ENCODE measurements at regions of chr12 and their contacts with region 1.

Region 1: DNA sequence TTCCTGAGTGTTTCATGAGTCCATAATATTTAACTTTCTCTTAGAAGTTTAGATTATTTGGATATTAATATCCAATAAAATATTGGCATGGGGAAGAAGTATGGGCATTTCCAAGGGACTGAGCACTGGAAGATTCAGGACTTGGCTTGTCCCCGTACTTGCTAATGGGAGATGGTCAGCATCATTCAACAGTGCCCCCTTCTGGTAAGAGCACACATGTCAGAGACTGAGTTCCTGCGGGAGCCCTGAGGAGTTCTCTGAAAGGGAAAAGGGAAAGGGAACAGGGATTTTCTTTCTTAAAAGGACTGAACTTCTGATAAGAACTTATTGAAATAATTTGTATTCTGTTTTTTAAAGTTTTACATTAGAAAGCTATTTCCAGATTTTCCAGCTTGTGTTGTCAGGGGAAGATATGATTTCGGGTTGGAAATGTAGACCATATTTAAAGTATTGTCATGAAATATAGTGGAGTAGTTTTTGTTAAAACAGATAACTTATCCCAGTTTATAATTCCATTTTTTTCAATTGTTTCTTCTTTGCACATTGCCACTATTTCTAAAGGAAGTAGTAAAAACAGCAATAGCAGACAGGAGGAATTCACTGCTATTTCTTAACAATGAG is 59.8 kb upstream of the C12orf71 start:
- DNase-seq: peak; percentile 79
- H3K4me3 ChIP-seq: no peak overlapping the region
- H3K27ac ChIP-seq: peak overlapping the region in 2 of 4 donors; percentile 37 to 55
- H3K4me1 ChIP-seq: peaks cover 0 to 24% (median 9%) of the 10 kb centered on the region in 4 donors
- H3K27me3 ChIP-seq: no peaks in the 10 kb centered on the region
- CTCF ChIP-seq: peak; percentile 63 to 79 (median 69)
- EP300 ChIP-seq: no peak
- POLR2A ChIP-seq: no peak

Region 2: GRCh38 chr12:27024291-27024690 is 117.9 kb before region 1 on chr12:
- intact Hi-C with region 1: loop called (anchors 5 kb)
- DNase-seq: no peak
- H3K4me3 ChIP-seq: no peak overlapping the region
- H3K27ac ChIP-seq: no peak overlapping the region
- H3K4me1 ChIP-seq: peaks cover 0 to 27% (median 18%) of the 10 kb centered on the region in 4 donors
- H3K27me3 ChIP-seq: no peaks in the 10 kb centered on the region
- CTCF ChIP-seq: no peak
- EP300 ChIP-seq: no peak
- POLR2A ChIP-seq: no peak

Region 3: DNA sequence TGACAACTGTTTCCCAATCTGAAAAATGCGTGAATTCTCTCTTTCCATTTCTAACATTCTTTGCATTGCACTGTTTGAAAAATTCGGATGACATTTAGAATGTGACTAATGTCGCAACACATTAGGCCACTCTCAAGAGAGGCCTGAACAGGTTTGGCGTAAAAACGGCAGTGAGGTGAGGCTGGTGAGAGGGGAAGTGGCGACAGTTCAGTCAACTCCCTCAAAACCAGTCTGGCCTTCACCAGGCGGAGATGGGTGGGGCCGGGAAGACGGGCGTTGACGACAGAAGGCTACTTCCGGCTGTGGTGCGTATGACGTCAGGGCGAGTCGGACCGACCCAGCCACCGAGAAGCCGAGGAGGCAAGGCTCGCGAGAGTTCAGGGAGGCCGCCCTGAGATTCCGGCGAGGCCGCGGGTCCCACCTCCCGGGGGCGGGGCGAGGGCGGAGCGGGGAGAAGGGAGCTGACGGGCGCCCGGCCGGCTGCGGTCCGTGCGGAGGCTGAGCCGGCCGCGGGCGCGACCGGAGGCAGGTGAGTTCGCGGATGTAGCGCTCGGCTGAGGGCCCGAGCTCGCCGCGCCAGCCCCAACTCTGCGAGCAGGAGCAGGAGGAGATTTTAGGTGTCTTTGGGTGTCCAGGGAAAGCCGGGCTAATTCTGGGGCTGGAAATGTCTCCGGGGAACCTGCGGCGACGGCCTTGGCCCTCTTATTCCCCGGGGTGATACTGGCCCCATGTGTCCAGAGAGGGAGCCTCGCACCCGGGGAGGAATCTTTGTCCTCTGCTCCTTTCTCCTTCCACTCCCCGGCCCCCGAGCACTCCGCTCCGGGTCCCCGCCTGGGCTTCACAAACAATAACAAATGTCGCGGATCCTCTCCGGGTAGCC is 101.8 kb after region 1 on chr12 and contains the start of gene STK38L:
- intact Hi-C with region 1: loop called (anchors 5 kb)
- DNase-seq: peak; percentile 98
- H3K4me3 ChIP-seq: peak within 1 kb of the TSS; percentile 64 to 95 (median 80)
- H3K27ac ChIP-seq: peak within 1 kb of the TSS; percentile 88 to 95 (median 94)
- H3K4me1 ChIP-seq: peaks cover 0 to 33% (median 21%) of the 10 kb centered on the region in 4 donors
- H3K27me3 ChIP-seq: no peaks in the 10 kb centered on the region
- CTCF ChIP-seq: peak in 2 of 4 experiments; percentile 33 to 43
- EP300 ChIP-seq: peak in 1 of 4 donors; percentile 4
- POLR2A ChIP-seq: peak; percentile 80 to 85
- total RNA-seq, gene STK38L: 67.3 to 86.2 (median 78.3) TPM

Region 4: DNA sequence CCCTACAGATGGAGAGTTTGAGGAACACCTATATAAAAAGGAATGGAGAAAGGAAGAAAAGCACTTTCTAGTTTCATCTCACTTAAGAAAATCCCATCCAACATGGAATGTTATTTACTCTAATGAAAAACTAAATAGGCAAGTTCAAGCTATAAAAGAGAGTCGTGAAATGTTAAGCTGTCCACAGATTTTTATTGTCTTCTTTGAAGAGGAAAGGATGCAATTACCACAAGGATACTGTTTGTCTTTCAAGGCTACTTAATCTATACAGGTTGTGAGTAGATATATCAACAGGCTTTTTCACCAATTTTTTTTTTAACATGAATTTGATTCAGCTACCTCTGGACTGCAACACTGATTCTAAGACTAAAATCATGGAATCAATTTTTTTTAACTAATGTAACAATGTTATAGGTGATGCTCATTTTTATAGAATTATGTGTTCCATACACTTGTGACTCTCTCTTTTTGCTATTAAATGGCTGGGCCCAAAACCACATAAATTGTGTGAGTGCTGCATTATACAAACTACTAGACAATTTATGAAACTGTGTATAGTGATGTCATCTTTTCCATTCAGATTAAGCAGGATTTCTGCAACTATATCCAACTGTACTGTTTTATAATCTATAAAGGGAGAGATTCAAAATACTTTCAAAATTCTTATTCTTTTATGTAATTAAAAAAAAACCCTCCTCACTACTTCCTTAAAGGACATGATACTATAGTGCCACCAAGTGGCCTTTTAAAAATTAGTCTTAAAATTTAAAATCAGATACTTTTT is 163.7 kb after region 1 on chr12:
- intact Hi-C with region 1: loop called (anchors 5 kb)
- DNase-seq: no peak
- H3K4me3 ChIP-seq: no peak overlapping the region
- H3K27ac ChIP-seq: peak overlapping the region; percentile 53 to 73 (median 66)
- H3K4me1 ChIP-seq: peaks cover 0 to 27% (median 23%) of the 10 kb centered on the region in 4 donors
- H3K27me3 ChIP-seq: no peaks in the 10 kb centered on the region
- CTCF ChIP-seq: peak; percentile 13 to 55 (median 25)
- EP300 ChIP-seq: no peak
- POLR2A ChIP-seq: no peak

Region 5: GRCh38 chr12:27447761-27448160 is 305.6 kb after region 1 on chr12:
- intact Hi-C with region 1: no loop called
- DNase-seq: no peak
- H3K4me3 ChIP-seq: no peak overlapping the region
- H3K27ac ChIP-seq: no peak overlapping the region
- H3K4me1 ChIP-seq: no peaks in the 10 kb centered on the region
- H3K27me3 ChIP-seq: no peaks in the 10 kb centered on the region
- CTCF ChIP-seq: no peak
- EP300 ChIP-seq: no peak
- POLR2A ChIP-seq: no peak